CD4-positive, alpha-beta memory T cell (primary cell): ENCODE measurements at regions of chr10 and their contacts with region 1.

Region 1: DNA sequence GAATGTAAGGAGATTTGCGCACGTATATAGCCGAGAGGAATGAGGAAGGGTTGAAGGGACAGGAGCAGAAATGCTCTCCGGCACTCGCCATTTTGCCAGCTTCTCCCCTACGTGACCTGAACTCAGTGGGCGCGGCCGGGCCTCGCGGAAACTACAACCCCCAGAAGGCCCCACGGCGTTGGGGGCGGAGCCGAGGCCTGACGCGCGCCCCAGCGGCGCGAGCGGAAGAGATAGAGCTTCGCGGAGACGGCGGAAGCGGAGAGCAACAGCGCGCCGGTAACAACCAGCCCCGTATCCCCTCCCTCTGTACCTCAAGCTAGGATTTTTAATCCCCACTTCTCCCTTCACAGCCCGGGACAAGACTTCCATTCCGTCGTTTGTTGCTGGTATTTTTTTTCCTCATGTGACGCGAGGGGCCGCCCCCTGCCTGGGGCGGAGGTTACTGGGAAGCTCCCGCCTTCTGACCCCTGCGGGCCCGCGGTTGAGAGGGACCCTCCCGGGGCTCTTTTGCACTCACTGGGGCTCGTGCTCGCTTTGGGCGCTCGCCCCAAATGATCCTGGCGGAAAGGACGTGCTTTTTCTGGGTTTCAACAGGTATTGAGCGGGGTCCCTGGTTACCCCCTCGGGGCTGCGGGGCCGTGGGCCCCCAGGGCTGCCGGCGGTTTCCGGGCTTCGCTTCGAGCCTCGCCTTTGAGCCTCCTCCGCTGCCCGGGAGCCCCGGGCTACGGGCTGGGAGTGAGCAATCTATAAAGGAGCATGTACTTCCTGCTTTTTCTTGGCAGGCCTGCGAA is at the start of gene R3HCC1L:
- DNase-seq: peak; percentile 89 to 95 (median 92)
- H3K4me3 ChIP-seq: peak within 1 kb of the TSS; percentile 83 to 84
- H3K4me3 Mint-ChIP-seq: peak within 1 kb of the TSS; percentile 77 to 93 (median 87)
- H3K27ac ChIP-seq: peak within 1 kb of the TSS; percentile 97
- H3K27ac Mint-ChIP-seq: peak within 1 kb of the TSS; percentile 89 to 98 (median 95)
- H3K4me1 ChIP-seq: peaks cover 43% of the 10 kb centered on the region
- H3K4me1 Mint-ChIP-seq: peaks cover 28 to 54% (median 43%) of the 10 kb centered on the region in 4 donors
- H3K27me3 ChIP-seq: no peaks in the 10 kb centered on the region
- H3K27me3 Mint-ChIP-seq: no peaks in the 10 kb centered on the region
- total RNA-seq, gene R3HCC1L: 27.2 to 30.4 TPM

Region 2: DNA sequence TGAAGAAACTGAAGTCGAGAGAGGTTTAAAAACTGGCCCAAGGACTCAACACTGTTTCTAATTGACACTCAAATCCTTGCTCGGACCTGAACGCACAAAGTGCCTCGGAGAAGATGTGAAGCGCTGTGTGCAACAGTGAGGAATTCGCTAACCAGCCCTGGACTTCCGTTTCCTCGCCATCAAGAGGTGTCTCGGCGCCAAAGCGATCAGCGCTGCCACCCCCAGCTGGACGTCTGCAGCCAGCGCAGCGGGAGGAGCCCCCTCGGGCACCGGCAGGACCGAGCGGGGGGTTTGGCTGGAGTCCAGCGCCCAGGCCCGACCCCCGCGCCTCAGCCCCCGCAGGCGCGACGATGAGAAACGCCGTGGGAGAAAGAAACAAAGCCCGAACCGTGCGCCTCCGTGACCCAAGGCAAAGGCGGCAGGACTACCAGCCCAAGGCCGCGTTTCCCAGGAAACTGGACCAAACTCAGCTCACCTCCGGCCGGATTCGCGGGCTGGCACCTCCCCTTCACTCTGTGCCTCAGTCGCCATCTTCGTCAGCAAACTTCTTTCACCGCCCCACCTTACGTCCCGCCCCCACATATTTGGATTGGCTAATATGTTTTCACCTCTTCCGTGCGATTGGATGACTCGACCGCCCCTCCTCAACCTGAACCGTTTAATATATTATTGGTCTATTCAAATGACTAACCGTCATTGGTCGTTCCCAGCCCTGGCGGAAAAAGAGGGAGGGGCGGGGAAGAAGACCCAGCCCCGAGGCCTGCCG is 842.3 kb before region 1 on chr10 and contains the start of gene ARHGAP19:
- CTCF ChIA-PET with region 1: no interaction called
- POLR2A ChIA-PET with region 1: no interaction called
- intact Hi-C with region 1: loop called (anchors 10 kb)
- DNase-seq: peak; percentile 94 to 98 (median 95)
- H3K4me3 ChIP-seq: peak within 1 kb of the TSS; percentile 76 to 85
- H3K4me3 Mint-ChIP-seq: peak within 1 kb of the TSS; percentile 90 to 99 (median 94)
- H3K27ac ChIP-seq: peak within 1 kb of the TSS; percentile 78
- H3K27ac Mint-ChIP-seq: peak within 1 kb of the TSS; percentile 85 to 97 (median 95)
- H3K4me1 ChIP-seq: peaks cover 11% of the 10 kb centered on the region
- H3K4me1 Mint-ChIP-seq: peaks cover 8 to 25% (median 20%) of the 10 kb centered on the region in 4 donors
- H3K27me3 ChIP-seq: no peaks in the 10 kb centered on the region
- H3K27me3 Mint-ChIP-seq: peaks cover 1 to 3% of the 10 kb centered on the region in 2 donors
- total RNA-seq, gene ARHGAP19: 17.0 to 19.3 TPM

Region 3: DNA sequence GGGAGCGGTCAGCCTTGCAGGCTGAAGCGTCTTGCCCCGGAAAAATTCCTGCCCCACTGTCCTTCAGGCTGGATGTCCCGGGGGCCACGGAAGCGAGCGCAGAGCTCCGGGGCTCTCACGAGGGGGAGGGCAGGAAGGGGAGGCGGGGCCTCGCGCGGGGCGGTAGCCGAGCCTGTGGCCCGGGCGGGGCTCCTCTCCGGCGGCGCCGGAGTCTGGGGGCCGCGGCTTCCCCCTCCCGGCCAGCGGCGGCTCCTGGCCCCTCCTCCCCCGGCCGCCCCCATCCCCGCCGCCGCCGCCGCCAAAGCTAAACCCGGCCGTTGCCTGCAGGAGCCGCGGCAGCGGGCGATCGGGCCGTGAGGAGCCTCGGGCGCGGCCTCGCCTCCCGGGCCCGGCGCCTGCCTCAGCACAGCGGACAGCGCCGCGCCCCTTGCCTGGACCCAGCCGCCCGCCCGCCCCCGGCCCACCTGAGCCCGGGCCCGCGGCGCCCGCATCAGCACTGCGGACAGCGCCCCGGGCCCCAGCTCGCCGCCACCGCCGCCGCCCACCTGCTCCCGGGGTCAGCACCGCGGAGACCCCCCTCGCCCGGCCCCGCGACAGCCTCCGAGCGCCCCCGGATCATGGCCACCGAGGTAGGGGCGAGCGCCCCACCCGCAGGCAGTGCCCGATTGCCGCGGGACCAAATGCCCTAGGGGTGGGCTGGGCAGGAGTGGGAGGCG is 284.8 kb before region 1 on chr10 and contains the start of gene GOLGA7B:
- CTCF ChIA-PET with region 1: no interaction called
- POLR2A ChIA-PET with region 1: interaction called, 5 read pairs
- intact Hi-C with region 1: loop called (anchors 5 kb)
- DNase-seq: peak; percentile 60 to 72 (median 70)
- H3K4me3 ChIP-seq: peak within 1 kb of the TSS; percentile 76 to 79
- H3K4me3 Mint-ChIP-seq: peak within 1 kb of the TSS; percentile 92 to 98 (median 94)
- H3K27ac ChIP-seq: peak within 1 kb of the TSS; percentile 32
- H3K27ac Mint-ChIP-seq: peak within 1 kb of the TSS; percentile 87 to 94 (median 91)
- H3K4me1 ChIP-seq: peaks cover 40% of the 10 kb centered on the region
- H3K4me1 Mint-ChIP-seq: peaks cover 29 to 46% (median 39%) of the 10 kb centered on the region in 4 donors
- H3K27me3 ChIP-seq: no peaks in the 10 kb centered on the region
- H3K27me3 Mint-ChIP-seq: no peaks in the 10 kb centered on the region
- total RNA-seq, gene GOLGA7B: 7.6 to 7.9 TPM

Region 4: DNA sequence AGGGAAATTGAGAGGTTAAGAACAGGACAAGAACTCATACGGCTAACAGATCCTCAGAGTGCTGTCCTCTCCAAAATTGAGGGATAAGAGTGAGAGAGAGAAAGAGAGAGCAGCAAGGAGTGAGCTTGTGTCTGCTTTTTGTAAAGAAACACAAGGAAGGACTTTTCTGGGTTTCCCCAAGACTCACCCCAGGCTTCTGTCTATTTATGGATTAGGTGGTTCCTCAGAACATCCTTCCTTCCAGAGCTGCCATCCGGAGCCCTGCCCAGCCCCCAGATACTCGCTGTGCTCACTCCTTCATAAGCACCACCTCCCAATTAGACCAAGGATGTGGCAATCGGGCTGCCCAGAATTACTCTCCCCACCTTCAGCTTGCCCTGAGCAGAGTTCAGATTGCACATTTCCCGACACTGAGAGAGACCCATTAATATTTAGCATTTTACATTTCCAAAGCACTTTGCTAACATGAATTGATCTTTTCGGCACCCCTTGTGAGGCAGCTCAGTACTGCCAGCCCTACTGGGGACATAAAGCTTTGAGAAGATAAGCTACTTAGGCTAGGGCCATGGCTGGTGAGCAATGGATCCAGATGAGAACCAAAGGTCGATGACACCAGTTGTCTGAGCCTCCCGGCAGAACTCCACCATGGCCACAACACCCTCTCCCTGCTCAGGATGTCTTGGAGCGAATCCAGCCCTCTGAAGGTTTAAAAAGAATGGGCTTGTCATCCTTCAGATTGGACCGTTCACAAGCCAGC is 19.4 kb before region 1 on chr10:
- CTCF ChIA-PET with region 1: no interaction called
- POLR2A ChIA-PET with region 1: no interaction called
- intact Hi-C with region 1: no loop called
- DNase-seq: no peak
- H3K4me3 ChIP-seq: no peak overlapping the region
- H3K4me3 Mint-ChIP-seq: no peak overlapping the region
- H3K27ac ChIP-seq: no peak overlapping the region
- H3K27ac Mint-ChIP-seq: no peak overlapping the region
- H3K4me1 ChIP-seq: no peaks in the 10 kb centered on the region
- H3K4me1 Mint-ChIP-seq: no peaks in the 10 kb centered on the region
- H3K27me3 ChIP-seq: peaks cover 5% of the 10 kb centered on the region
- H3K27me3 Mint-ChIP-seq: peaks cover 29 to 41% of the 10 kb centered on the region in 2 donors

Region 5: DNA sequence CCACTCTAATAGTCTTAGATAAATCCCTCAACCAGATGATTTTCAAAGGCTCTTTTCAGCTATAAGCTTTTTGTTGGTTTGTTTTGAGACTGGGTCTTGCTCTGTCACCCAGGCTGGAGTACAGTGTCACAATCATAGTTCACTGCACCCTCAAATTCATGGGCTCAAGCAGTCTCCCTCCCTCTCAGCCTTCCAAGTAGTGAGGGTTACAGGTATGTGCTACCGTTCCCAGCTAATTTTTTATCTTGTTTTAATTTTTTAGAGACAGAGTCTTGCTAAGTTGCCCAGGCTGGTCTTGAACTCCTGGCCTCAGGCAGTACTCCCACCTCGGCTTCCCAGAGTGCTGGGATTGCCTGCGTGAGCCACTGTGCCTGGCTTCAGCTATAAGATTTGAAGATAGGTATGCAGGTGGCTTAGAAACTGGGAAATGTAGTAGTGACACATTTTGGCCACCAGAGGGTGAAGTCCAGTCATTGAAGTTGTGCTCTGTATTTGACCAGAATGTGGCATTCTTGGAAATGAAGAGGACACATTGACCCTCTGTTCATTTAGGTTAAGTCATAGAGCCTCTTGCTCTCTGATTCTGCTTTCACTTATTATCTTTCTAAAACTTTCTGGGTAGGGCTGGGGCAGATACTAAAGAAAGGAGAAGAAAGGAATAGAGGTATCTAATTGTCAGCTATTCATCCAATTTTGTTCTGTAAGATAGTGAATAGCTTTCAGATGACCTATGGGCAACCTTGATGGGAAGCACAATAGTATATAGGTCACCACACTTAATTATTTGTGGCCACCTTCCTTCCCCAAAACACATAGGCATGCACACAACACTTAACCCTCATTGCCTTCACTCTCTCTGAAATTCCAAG is 35.9 kb after region 1 on chr10:
- CTCF ChIA-PET with region 1: interaction called, 17 read pairs
- POLR2A ChIA-PET with region 1: interaction called, 3 read pairs
- intact Hi-C with region 1: no loop called
- DNase-seq: peak in 4 of 5 donors; percentile 10 to 27 (median 14)
- H3K4me3 ChIP-seq: no peak overlapping the region
- H3K4me3 Mint-ChIP-seq: no peak overlapping the region
- H3K27ac ChIP-seq: no peak overlapping the region
- H3K27ac Mint-ChIP-seq: no peak overlapping the region
- H3K4me1 ChIP-seq: peaks cover 4% of the 10 kb centered on the region
- H3K4me1 Mint-ChIP-seq: peaks cover 28 to 48% (median 34%) of the 10 kb centered on the region in 4 donors
- H3K27me3 ChIP-seq: no peaks in the 10 kb centered on the region
- H3K27me3 Mint-ChIP-seq: no peaks in the 10 kb centered on the region

Region 6: GRCh38 chr10:98446661-98447221 is 312.1 kb after region 1 on chr10 and contains the start of gene HPS1:
- CTCF ChIA-PET with region 1: no interaction called
- POLR2A ChIA-PET with region 1: interaction called, 8 read pairs
- intact Hi-C with region 1: loop called (anchors 5 kb)
- DNase-seq: peak; percentile 64 to 78 (median 78)
- H3K4me3 ChIP-seq: peak within 1 kb of the TSS; percentile 73 to 84
- H3K4me3 Mint-ChIP-seq: peak within 1 kb of the TSS; percentile 88 to 95 (median 94)
- H3K27ac ChIP-seq: peak within 1 kb of the TSS; percentile 76
- H3K27ac Mint-ChIP-seq: peak within 1 kb of the TSS; percentile 89 to 95 (median 93)
- H3K4me1 ChIP-seq: peaks cover 41% of the 10 kb centered on the region
- H3K4me1 Mint-ChIP-seq: peaks cover 29 to 58% (median 42%) of the 10 kb centered on the region in 4 donors
- H3K27me3 ChIP-seq: no peaks in the 10 kb centered on the region
- H3K27me3 Mint-ChIP-seq: no peaks in the 10 kb centered on the region
- total RNA-seq, gene HPS1: 106 to 115 TPM